Activated T-helper 2 cell treated with anti-CD3 and anti-CD28 coated beads, Interferon-gamma antibody, Interleukin-2, Interleukin-4, amounts not matched to agents 10 μg/mL and 5 μg/mL and 100 μg/mL, durations not matched to agents 14 hours and 24 hours and 36 hours (primary cell): ENCODE measurements at regions of chr6 and their contacts with region 1.

Region 1: GRCh38 chr6:45377554-45378333 is at the start of gene SUPT3H:
- DNase-seq: peak; percentile 89
- H3K4me3 Mint-ChIP-seq: peak within 1 kb of the TSS; percentile 99
- H3K27ac Mint-ChIP-seq: peak within 1 kb of the TSS; percentile 100
- H3K4me1 Mint-ChIP-seq: peaks cover 23% of the 10 kb centered on the region
- H3K27me3 Mint-ChIP-seq: no peaks in the 10 kb centered on the region
- total RNA-seq, gene SUPT3H: 14.8 and 19.4 TPM in 2 replicates

Region 2: GRCh38 chr6:44642870-44643529 is 734.7 kb before region 1 on chr6:
- intact Hi-C with region 1: loop called (anchors 2 kb)
- DNase-seq: peak; percentile 39
- H3K4me3 Mint-ChIP-seq: no peak overlapping the region
- H3K27ac Mint-ChIP-seq: peak overlapping the region; percentile 91
- H3K4me1 Mint-ChIP-seq: peaks cover 31% of the 10 kb centered on the region
- H3K27me3 Mint-ChIP-seq: no peaks in the 10 kb centered on the region

Region 3: DNA sequence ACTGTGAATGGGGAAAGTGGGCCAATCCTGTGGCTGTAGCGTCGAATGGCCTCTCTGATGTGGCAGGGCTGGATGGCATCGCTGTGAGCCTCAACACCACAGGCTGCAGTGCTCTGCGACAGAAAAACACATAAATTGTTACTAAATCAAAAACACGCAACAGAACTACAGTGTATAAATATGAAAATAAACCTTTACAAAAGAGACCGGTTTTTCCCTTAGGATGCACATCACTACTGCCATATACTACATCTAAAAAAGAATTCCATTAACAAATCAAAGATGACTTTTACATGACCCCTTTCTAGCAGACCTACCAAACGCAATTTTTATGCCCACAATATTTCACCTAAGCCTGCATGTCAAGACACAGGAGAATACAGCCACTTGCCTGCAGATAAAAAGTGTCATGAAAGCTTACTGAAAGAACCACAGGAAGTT is 445.1 kb before region 1 on chr6:
- intact Hi-C with region 1: loop called (anchors 10 kb)
- DNase-seq: no peak
- H3K4me3 Mint-ChIP-seq: peak overlapping the region; percentile 78
- H3K27ac Mint-ChIP-seq: peak overlapping the region; percentile 93
- H3K4me1 Mint-ChIP-seq: peaks cover 48% of the 10 kb centered on the region
- H3K27me3 Mint-ChIP-seq: no peaks in the 10 kb centered on the region

Region 4: DNA sequence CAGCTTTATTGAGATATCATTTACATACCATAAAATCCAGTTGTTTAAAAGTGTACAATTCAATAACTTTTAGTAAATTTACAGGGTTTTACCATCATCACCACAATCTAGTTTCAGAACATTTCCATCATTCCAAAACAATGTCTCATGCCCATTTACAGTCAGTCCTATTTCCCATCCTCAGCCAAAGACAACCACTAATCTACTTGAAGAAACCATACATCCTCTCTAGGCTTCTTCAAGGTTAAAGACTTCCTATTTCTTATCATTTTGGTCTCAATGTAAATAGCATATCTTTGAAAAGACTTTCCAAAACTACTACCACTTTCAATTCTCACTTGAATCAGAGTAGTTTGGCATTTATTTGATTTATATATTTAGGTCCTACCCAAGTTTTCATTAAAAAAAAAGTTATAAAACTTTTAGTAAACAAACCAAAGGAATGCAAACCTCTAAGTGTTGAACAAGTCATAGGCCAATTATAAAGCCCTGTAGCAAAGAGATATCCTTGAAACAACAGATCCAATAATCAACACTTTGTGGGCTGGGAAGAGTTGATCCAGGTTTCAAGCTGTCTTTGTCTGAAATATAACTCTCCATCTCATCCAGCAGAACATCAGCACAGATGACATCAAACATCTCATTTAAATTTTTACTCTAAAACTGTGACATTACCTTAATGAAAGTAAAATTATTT is 260.9 kb before region 1 on chr6:
- intact Hi-C with region 1: loop called (anchors 5 kb)
- DNase-seq: no peak
- H3K4me3 Mint-ChIP-seq: no peak overlapping the region
- H3K27ac Mint-ChIP-seq: peak overlapping the region; percentile 34
- H3K4me1 Mint-ChIP-seq: peaks cover 27% of the 10 kb centered on the region
- H3K27me3 Mint-ChIP-seq: no peaks in the 10 kb centered on the region

Region 5: DNA sequence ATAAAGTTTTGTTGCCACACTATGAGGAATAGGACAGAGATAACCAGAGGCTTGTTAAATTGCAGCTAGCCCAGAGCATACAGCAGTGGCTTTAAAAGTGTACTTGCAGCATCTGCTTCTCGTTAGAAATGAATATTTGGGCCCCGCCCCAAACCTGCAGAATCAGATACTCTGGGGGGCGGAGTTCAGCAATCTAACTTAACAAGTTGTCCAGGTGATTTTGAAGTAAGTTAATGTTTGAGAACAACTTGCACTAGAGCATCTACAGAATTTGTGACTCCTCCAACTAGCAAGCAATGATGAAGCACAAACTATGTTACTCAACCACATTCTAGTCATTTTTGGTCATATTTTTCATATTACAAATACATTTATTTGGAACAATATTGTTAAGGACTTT is 10.6 kb after region 1 on chr6:
- intact Hi-C with region 1: no loop called
- DNase-seq: no peak
- H3K4me3 Mint-ChIP-seq: no peak overlapping the region
- H3K27ac Mint-ChIP-seq: no peak overlapping the region
- H3K4me1 Mint-ChIP-seq: no peaks in the 10 kb centered on the region
- H3K27me3 Mint-ChIP-seq: no peaks in the 10 kb centered on the region

Region 6: DNA sequence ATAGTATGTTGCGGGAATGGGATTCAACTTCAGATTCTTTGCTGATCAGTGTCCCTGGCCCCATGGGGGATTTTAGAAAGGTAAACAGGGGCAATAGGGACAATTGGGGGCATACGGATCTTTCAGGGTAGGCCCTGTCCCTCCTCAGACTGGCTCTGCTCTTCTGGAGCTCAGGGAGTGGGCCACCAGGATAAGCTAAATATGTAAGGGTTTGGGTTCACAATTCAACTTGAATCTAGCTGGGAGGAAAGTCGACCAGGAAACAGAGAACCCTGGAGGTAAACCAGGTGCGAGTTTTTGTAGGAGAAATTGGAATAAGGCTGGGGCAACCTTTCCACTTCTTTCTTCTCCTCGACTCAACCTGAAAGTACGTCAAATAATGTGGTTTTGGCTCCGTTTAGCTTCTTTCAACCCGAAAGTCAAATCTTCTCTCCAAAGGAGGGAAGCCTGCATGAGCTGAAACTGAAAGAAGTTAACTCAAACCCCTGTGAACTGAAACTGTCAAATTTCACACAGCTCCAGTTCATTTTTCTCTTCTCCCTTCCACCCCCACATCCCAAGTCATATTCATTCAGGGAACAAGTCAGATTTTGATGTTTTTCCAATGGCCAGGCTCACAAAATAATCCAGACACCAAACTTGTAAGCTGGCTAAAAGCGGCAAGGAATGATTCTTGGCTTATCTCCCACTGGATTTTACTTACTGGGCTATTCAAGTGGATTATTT is 359.8 kb after region 1 on chr6:
- intact Hi-C with region 1: loop called (anchors 1 kb)
- DNase-seq: peak; percentile 35
- H3K4me3 Mint-ChIP-seq: peak overlapping the region; percentile 47
- H3K27ac Mint-ChIP-seq: peak overlapping the region; percentile 92
- H3K4me1 Mint-ChIP-seq: peaks cover 69% of the 10 kb centered on the region
- H3K27me3 Mint-ChIP-seq: no peaks in the 10 kb centered on the region